B cell (primary cell): ENCODE measurements at regions of chr1 and their contacts with region 1.

Region 1: GRCh38 chr1:23790696-23791515 is at the start of gene LYPLA2:
- DNase-seq: peak; percentile 89
- ATAC-seq: peak; percentile 91
- H3K4me3 ChIP-seq: peak within 1 kb of the TSS; percentile 70 to 94 (median 88)
- H3K4me3 Mint-ChIP-seq: peak within 1 kb of the TSS; percentile 98
- H3K27ac ChIP-seq: peak within 1 kb of the TSS; percentile 69 to 81
- H3K27ac Mint-ChIP-seq: peak within 1 kb of the TSS; percentile 97
- H3K4me1 ChIP-seq: peaks cover 11 to 21% of the 10 kb centered on the region in 2 donors
- H3K4me1 Mint-ChIP-seq: peaks cover 21% of the 10 kb centered on the region
- H3K27me3 ChIP-seq: no peaks in the 10 kb centered on the region
- H3K27me3 Mint-ChIP-seq: no peaks in the 10 kb centered on the region
- CTCF ChIP-seq: no peak
- total RNA-seq, gene LYPLA2: 50.6 and 52.2 TPM in 2 replicates

Region 2: DNA sequence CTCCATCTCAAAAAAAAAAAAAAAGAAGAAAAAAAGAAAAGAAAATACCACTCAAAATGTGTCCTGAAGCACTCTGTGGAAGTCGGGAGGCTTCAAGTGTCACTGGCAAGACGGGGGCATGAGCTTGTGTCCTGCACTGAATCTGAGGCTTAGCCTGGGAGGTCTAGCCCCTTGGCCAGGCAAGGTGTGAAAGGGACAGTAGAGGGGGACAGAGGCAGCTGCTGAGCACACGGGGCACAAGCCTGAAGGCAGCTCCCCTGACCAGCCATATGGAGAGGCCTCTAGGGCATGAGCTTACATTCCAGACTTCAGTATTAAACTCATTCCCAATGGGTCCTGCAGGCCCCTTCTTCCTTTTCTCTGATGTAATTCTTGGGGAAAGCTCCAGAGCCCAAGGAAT is 283.4 kb before region 1 on chr1:
- CTCF ChIA-PET with region 1: no interaction called
- POLR2A ChIA-PET with region 1: interaction called, 13 read pairs
- intact Hi-C with region 1: no loop called
- DNase-seq: no peak
- ATAC-seq: no peak
- H3K4me3 ChIP-seq: no peak overlapping the region
- H3K4me3 Mint-ChIP-seq: no peak overlapping the region
- H3K27ac ChIP-seq: no peak overlapping the region
- H3K27ac Mint-ChIP-seq: no peak overlapping the region
- H3K4me1 ChIP-seq: no peaks in the 10 kb centered on the region
- H3K4me1 Mint-ChIP-seq: no peaks in the 10 kb centered on the region
- H3K27me3 ChIP-seq: no peaks in the 10 kb centered on the region
- H3K27me3 Mint-ChIP-seq: no peaks in the 10 kb centered on the region
- CTCF ChIP-seq: no peak

Region 3: DNA sequence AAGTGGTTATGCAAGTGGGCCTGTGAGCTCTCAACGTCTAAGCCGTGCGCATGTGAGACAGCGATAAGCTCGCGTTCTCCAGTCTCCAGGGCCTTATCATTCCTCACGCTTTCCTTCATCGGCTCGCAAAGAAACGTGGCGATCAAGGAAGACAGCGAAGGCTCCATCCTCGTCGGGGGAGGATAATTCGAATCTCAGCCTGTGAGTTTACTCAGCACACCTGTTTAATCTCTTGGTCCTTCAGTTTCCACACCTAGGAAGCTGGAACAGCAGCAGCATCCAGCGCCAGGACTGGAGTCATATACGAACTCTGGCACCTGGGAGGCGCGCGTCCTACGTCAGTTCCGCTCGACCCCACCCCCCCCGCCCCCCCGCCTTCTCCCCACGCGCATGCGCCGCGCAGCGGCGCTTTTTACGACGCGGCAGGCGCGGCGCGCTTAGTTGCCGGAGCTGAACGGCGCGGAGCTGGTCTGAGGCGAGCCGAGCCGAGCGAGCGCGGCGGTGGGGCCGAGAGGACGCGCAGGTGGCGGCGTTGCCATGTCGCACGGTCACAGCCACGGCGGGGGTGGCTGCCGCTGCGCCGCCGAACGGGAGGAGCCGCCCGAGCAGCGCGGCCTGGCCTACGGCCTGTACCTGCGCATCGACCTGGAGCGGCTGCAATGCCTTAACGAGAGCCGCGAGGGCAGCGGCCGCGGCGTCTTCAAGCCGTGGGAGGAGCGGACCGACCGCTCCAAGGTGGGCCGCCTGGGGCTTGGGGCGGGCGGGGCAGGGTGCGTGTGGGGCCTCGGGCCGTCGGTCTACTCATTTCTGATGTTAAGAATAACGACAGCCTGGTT is 12.7 kb before region 1 on chr1 and contains the start of gene PITHD1:
- CTCF ChIA-PET with region 1: interaction called, 3 read pairs
- POLR2A ChIA-PET with region 1: interaction called, 7 read pairs
- intact Hi-C with region 1: loop called (anchors 1 kb)
- DNase-seq: peak; percentile 92
- ATAC-seq: peak; percentile 88
- H3K4me3 ChIP-seq: peak within 1 kb of the TSS; percentile 60 to 91 (median 86)
- H3K4me3 Mint-ChIP-seq: peak within 1 kb of the TSS; percentile 91
- H3K27ac ChIP-seq: peak within 1 kb of the TSS; percentile 67 to 86
- H3K27ac Mint-ChIP-seq: peak within 1 kb of the TSS; percentile 90
- H3K4me1 ChIP-seq: peaks cover 15 to 20% of the 10 kb centered on the region in 2 donors
- H3K4me1 Mint-ChIP-seq: peaks cover 30% of the 10 kb centered on the region
- H3K27me3 ChIP-seq: no peaks in the 10 kb centered on the region
- H3K27me3 Mint-ChIP-seq: no peaks in the 10 kb centered on the region
- CTCF ChIP-seq: no peak
- total RNA-seq, gene PITHD1: 56.7 and 62.2 TPM in 2 replicates

Region 4: GRCh38 chr1:24909388-24909898 is 1118.5 kb after region 1 on chr1:
- CTCF ChIA-PET with region 1: no interaction called
- POLR2A ChIA-PET with region 1: no interaction called
- intact Hi-C with region 1: no loop called
- DNase-seq: no peak
- ATAC-seq: no peak
- H3K4me3 ChIP-seq: no peak overlapping the region
- H3K4me3 Mint-ChIP-seq: no peak overlapping the region
- H3K27ac ChIP-seq: no peak overlapping the region
- H3K27ac Mint-ChIP-seq: no peak overlapping the region
- H3K4me1 ChIP-seq: no peaks in the 10 kb centered on the region
- H3K4me1 Mint-ChIP-seq: peaks cover 10% of the 10 kb centered on the region
- H3K27me3 ChIP-seq: no peaks in the 10 kb centered on the region
- H3K27me3 Mint-ChIP-seq: no peaks in the 10 kb centered on the region
- CTCF ChIP-seq: no peak